ENCODE measurements at regions of chr19 and their contacts with region 1.

Region 1: GRCh38 chr19:18281082-18282020 is at the start of gene JUND:
- DNase-seq: peak; percentile 98
- total RNA-seq, gene JUND: 140 TPM

Region 2: GRCh38 chr19:18304458-18305310 is 23.3 kb after region 1 on chr19:
- intact Hi-C with region 1: loop called (anchors 1 kb)
- DNase-seq: peak; percentile 93

Region 3: GRCh38 chr19:18322759-18323460 is 41.6 kb after region 1 on chr19 and contains the start of gene LSM4:
- intact Hi-C with region 1: loop called (anchors 1 kb)
- DNase-seq: peak; percentile 99
- total RNA-seq, gene LSM4: 83.8 TPM

Region 4: GRCh38 chr19:18328340-18329034 is 47.1 kb after region 1 on chr19:
- intact Hi-C with region 1: loop called (anchors 1 kb)
- DNase-seq: peak; percentile 93

Region 5: GRCh38 chr19:18419195-18419698 is 137.9 kb after region 1 on chr19 and contains the start of gene SSBP4:
- intact Hi-C with region 1: loop called (anchors 5 kb)
- DNase-seq: no peak
- total RNA-seq, gene SSBP4: 47.4 TPM

Measured in cardiac septum (tissue), 1 donor.